Breast epithelium (tissue), 4 donors: ENCODE measurements at regions of chr2 and their contacts with region 1.

Region 1: GRCh38 chr2:227125506-227125905 is 38.5 kb downstream of the COL4A4 start:
- DNase-seq: no peak
- H3K4me3 ChIP-seq: no peak overlapping the region
- H3K27ac ChIP-seq: no peak overlapping the region
- H3K4me1 ChIP-seq: no peaks in the 10 kb centered on the region
- H3K27me3 ChIP-seq: no peaks in the 10 kb centered on the region
- CTCF ChIP-seq: no peak
- POLR2A ChIP-seq: no peak

Region 2: DNA sequence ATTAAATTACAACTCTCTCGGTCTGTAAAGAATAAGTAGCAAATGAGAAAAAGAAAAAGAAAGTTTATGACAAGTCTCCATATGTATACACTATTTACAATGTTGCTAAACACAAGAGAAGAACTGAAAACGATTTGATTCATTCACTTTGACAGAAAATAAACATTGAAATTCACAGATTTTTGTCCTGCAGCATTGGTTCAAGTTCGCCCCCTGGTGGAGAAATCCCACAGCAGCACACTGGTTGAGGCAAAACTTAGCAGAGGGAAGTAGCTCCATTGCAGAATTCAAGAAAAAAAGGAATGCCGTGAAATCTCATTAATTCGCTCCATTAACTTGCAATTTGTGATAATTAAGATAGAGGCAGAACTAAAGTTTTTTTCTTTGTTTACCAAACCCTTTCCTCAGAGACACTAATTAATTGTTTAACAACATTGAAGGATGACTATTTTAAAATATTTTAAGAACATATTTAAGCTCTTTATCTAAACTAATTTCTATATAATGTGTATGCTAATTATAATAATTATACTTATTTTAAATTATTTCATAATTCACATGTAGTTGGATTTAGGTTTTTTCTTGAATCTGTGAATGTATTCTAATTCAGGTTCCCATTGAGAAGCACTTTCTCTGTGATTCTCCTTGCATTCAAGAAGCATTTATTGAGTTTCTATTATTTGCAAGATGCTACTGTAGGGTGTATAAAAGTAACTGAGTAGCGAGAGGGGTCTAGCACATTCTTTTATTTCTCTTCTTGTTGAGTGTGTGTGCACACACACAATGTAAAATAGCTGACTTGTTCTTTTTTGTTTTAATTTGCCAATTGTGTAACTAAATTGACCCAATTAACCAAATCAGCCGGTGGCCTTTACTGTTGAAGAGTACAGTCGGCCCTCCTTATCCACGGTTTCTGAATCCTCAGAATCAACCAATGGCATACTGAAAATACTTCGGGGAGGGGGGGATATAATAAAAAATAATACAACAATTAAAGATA is 113.0 kb after region 1 on chr2:
- intact Hi-C with region 1: loop called (anchors 10 kb)
- DNase-seq: peak; percentile 41 to 61
- H3K4me3 ChIP-seq: no peak overlapping the region
- H3K27ac ChIP-seq: no peak overlapping the region
- H3K4me1 ChIP-seq: no peaks in the 10 kb centered on the region
- H3K27me3 ChIP-seq: no peaks in the 10 kb centered on the region
- CTCF ChIP-seq: peak; percentile 73 to 86 (median 84)
- POLR2A ChIP-seq: no peak